ENCODE measurements at regions of chr5 and their contacts with region 1.

Region 1: DNA sequence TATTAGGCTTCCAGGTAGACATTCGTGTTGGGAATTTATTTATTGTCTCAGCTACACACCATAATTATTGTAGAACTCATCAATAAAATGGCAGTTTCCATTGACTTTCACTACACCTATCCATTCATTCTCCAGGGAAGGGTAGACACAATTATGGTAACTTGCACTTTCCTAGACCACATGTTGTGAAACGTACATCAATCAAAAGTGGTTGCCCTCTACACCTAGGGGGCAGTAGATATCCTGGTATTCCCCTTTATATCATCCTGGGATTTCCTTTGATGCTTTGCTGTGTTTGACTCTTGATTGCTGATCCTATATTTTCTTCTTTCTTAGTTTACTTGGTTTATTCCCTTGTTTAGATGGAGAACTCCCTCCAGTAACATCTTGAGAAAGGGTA is 47.9 kb downstream of the ADGRV1 start:
- DNase-seq: no peak
- H3K4me3 ChIP-seq: no peak overlapping the region
- H3K27ac ChIP-seq: no peak overlapping the region
- H3K4me1 ChIP-seq: no peaks in the 10 kb centered on the region
- H3K27me3 ChIP-seq: no peaks in the 10 kb centered on the region
- CTCF ChIP-seq: no peak
- POLR2A ChIP-seq: no peak

Region 2: DNA sequence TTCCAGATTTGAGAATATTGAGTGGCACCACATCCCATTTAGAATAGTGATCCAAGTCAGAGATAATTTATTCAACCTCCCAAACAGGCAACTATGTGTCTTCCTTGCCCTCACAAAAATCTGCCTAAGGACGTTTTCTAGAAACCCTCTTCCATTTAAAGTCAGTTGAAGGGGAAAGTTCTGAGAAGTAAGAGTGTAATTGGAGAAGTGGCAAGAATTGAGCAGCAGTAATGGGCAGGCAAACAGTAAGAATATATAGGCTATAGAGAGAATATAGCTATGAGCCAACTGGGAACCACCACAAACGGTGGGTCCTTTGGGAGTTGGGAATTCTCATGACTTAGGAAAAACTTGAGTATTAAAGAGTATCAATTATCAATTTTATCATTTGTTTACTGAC is 165.9 kb before region 1 on chr5:
- CTCF ChIA-PET with region 1: interaction called, 90 read pairs
- POLR2A ChIA-PET with region 1: no interaction called
- dilution Hi-C with region 1: no loop called
- intact Hi-C with region 1: loop called (anchors 1 kb)
- DNase-seq: no peak
- H3K4me3 ChIP-seq: no peak overlapping the region
- H3K27ac ChIP-seq: no peak overlapping the region
- H3K4me1 ChIP-seq: no peaks in the 10 kb centered on the region
- H3K27me3 ChIP-seq: peaks cover 0 to 5% of the 10 kb centered on the region in 2 experiments
- CTCF ChIP-seq: no peak
- POLR2A ChIP-seq: no peak

Region 3: GRCh38 chr5:90571147-90571773 is 35.3 kb before region 1 on chr5:
- CTCF ChIA-PET with region 1: no interaction called
- POLR2A ChIA-PET with region 1: no interaction called
- dilution Hi-C with region 1: no loop called
- intact Hi-C with region 1: no loop called
- DNase-seq: no peak
- H3K4me3 ChIP-seq: no peak overlapping the region
- H3K27ac ChIP-seq: no peak overlapping the region
- H3K4me1 ChIP-seq: no peaks in the 10 kb centered on the region
- H3K27me3 ChIP-seq: peaks cover 3 to 14% of the 10 kb centered on the region in 2 experiments
- CTCF ChIP-seq: no peak
- POLR2A ChIP-seq: no peak